CD4-positive, alpha-beta memory T cell (primary cell): ENCODE measurements at regions of chr14 and their contacts with region 1.

Region 1: DNA sequence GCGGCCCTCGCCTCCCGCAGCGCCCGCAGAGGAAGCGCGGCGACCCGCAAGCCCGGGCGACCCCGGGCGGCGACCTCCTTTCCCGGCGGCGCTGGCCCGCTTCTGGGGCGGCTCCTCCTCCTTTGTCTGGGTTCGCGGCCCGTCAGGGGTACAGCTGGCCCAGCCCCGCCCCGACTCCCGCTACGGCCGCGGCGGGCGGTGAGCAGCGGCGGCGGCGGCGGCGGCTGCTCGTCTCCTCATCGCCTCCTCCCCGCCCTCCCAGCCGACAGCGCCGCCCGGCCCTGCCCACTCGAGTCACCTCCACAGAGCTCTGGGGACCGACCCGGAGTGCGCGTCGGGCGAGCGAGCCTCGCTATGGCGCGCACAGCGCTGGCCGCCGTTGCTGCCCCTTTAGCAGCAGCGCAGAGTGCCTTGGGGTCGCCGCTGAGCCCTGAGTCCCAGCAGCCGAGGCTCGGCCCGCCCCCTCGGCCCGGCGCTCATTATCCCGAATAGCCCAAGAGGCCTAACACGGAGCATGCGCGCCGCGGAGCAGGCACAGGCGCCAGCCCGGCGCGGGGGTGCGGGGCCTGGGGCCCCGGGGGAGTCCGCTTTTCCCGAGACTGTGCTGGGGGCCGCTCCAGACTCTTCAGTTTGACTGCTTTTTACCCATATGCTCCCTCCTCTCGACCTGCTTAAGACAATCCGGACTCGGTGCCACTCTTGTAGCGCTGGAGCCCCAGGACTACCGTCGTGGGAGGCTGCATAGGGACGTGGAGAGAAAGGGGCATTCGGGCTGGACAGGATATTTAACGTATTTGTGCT is at the start of gene SOS2:
- DNase-seq: peak; percentile 83 to 89 (median 83)
- H3K4me3 ChIP-seq: peak within 1 kb of the TSS; percentile 50 to 81
- H3K4me3 Mint-ChIP-seq: peak within 1 kb of the TSS; percentile 86 to 97 (median 90)
- H3K27ac ChIP-seq: peak within 1 kb of the TSS; percentile 81
- H3K27ac Mint-ChIP-seq: peak within 1 kb of the TSS; percentile 90 to 98 (median 95)
- H3K4me1 ChIP-seq: peaks cover 48% of the 10 kb centered on the region
- H3K4me1 Mint-ChIP-seq: peaks cover 27 to 56% (median 38%) of the 10 kb centered on the region in 4 donors
- H3K27me3 ChIP-seq: no peaks in the 10 kb centered on the region
- H3K27me3 Mint-ChIP-seq: no peaks in the 10 kb centered on the region
- total RNA-seq, gene SOS2: 42.1 to 43.4 TPM

Region 2: GRCh38 chr14:49585803-49586672 is 645.6 kb before region 1 on chr14 and contains the start of gene RPS29:
- CTCF ChIA-PET with region 1: no interaction called
- POLR2A ChIA-PET with region 1: interaction called, 3 read pairs
- intact Hi-C with region 1: loop called (anchors 5 kb)
- DNase-seq: peak; percentile 98 to 99 (median 99)
- H3K4me3 ChIP-seq: peak within 1 kb of the TSS; percentile 93 to 98
- H3K4me3 Mint-ChIP-seq: peak within 1 kb of the TSS; percentile 87 to 98 (median 95)
- H3K27ac ChIP-seq: peak within 1 kb of the TSS; percentile 95
- H3K27ac Mint-ChIP-seq: peak within 1 kb of the TSS; percentile 88 to 100 (median 99)
- H3K4me1 ChIP-seq: peaks cover 38% of the 10 kb centered on the region
- H3K4me1 Mint-ChIP-seq: peaks cover 29 to 62% (median 42%) of the 10 kb centered on the region in 4 donors
- H3K27me3 ChIP-seq: no peaks in the 10 kb centered on the region
- H3K27me3 Mint-ChIP-seq: peaks cover 0 to 4% of the 10 kb centered on the region in 2 donors
- total RNA-seq, gene RPS29: 3,602 to 3,749 TPM

Region 3: GRCh38 chr14:49982501-49982951 is 249.1 kb before region 1 on chr14:
- CTCF ChIA-PET with region 1: no interaction called
- POLR2A ChIA-PET with region 1: no interaction called
- intact Hi-C with region 1: no loop called
- DNase-seq: peak; percentile 48 to 77 (median 64)
- H3K4me3 ChIP-seq: no peak overlapping the region
- H3K4me3 Mint-ChIP-seq: peak overlapping the region; percentile 71 to 89 (median 79)
- H3K27ac ChIP-seq: peak overlapping the region; percentile 64
- H3K27ac Mint-ChIP-seq: peak overlapping the region; percentile 89 to 98 (median 95)
- H3K4me1 ChIP-seq: peaks cover 92% of the 10 kb centered on the region
- H3K4me1 Mint-ChIP-seq: peaks cover 51 to 83% (median 70%) of the 10 kb centered on the region in 4 donors
- H3K27me3 ChIP-seq: no peaks in the 10 kb centered on the region
- H3K27me3 Mint-ChIP-seq: no peaks in the 10 kb centered on the region

Region 4: GRCh38 chr14:50116181-50116956 is 115.3 kb before region 1 on chr14 and contains the start of gene VCPKMT:
- CTCF ChIA-PET with region 1: no interaction called
- POLR2A ChIA-PET with region 1: interaction called, 4 read pairs
- intact Hi-C with region 1: loop called (anchors 1 kb)
- DNase-seq: peak; percentile 93 to 96 (median 95)
- H3K4me3 ChIP-seq: peak within 1 kb of the TSS; percentile 65 to 69
- H3K4me3 Mint-ChIP-seq: peak within 1 kb of the TSS; percentile 97 to 98 (median 98)
- H3K27ac ChIP-seq: peak within 1 kb of the TSS; percentile 93
- H3K27ac Mint-ChIP-seq: peak within 1 kb of the TSS; percentile 96 to 100 (median 99)
- H3K4me1 ChIP-seq: peaks cover 34% of the 10 kb centered on the region
- H3K4me1 Mint-ChIP-seq: peaks cover 10 to 32% (median 23%) of the 10 kb centered on the region in 4 donors
- H3K27me3 ChIP-seq: no peaks in the 10 kb centered on the region
- H3K27me3 Mint-ChIP-seq: no peaks in the 10 kb centered on the region
- total RNA-seq, gene VCPKMT: 17.3 to 20.1 TPM

Region 5: GRCh38 chr14:50215400-50215799 is 16.3 kb before region 1 on chr14:
- CTCF ChIA-PET with region 1: no interaction called
- POLR2A ChIA-PET with region 1: interaction called, 6 read pairs
- intact Hi-C with region 1: loop called (anchors 2 kb)
- DNase-seq: no peak
- H3K4me3 ChIP-seq: no peak overlapping the region
- H3K4me3 Mint-ChIP-seq: no peak overlapping the region
- H3K27ac ChIP-seq: no peak overlapping the region
- H3K27ac Mint-ChIP-seq: no peak overlapping the region
- H3K4me1 ChIP-seq: no peaks in the 10 kb centered on the region
- H3K4me1 Mint-ChIP-seq: peaks cover 23 to 37% (median 29%) of the 10 kb centered on the region in 4 donors
- H3K27me3 ChIP-seq: no peaks in the 10 kb centered on the region
- H3K27me3 Mint-ChIP-seq: no peaks in the 10 kb centered on the region

Region 6: DNA sequence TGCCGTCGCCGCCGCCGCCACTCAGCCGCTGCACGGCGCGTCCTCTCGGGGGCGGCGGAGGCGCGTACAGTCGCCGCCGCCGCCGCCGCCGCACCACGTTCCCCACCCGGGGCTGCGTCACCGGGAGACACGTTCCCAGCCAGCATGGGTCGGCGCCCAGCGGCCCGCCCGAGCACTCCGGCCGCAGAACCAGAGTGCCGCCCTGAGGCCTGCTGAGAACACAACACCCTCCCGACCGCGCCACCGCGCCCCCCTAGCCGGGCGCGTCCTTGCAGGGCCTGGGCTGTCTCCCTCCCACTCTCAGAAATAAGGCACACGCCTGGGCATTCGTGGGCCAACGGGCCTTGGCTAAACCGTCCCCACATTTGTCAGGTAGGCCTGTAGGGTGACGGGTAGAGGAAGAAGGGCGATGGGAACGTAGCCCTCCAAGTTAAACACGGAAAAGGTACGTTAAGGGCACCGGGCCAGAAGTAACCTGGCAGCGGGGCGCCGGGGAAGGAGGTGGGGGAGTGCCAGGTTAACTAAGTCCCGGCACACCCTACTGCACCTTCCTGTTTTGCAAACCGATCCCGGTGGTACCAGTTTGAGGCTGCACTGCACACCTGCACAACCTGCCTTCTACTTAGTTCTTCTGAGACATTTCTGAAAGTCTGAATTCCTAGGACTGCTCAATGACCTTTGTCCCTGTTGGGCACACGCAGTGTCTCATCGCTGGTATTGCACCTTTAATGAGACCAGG is 301.0 kb after region 1 on chr14 and contains the start of gene MAP4K5:
- CTCF ChIA-PET with region 1: no interaction called
- POLR2A ChIA-PET with region 1: interaction called, 6 read pairs
- intact Hi-C with region 1: loop called (anchors 2 kb)
- DNase-seq: peak; percentile 85 to 89 (median 88)
- H3K4me3 ChIP-seq: peak within 1 kb of the TSS; percentile 26 to 68
- H3K4me3 Mint-ChIP-seq: peak within 1 kb of the TSS; percentile 88 to 94 (median 93)
- H3K27ac ChIP-seq: peak within 1 kb of the TSS; percentile 69
- H3K27ac Mint-ChIP-seq: peak within 1 kb of the TSS; percentile 85 to 95 (median 91)
- H3K4me1 ChIP-seq: peaks cover 46% of the 10 kb centered on the region
- H3K4me1 Mint-ChIP-seq: peaks cover 33 to 50% (median 43%) of the 10 kb centered on the region in 4 donors
- H3K27me3 ChIP-seq: no peaks in the 10 kb centered on the region
- H3K27me3 Mint-ChIP-seq: no peaks in the 10 kb centered on the region
- total RNA-seq, gene MAP4K5: 42.6 to 43.0 TPM